PC-9 (cell line): ENCODE measurements at regions of chrX and their contacts with region 1.

Region 1: GRCh38 chrX:15425024-15425423 is 40.8 kb upstream of the VEGFD start:
- DNase-seq: no peak
- H3K4me3 ChIP-seq: no peak overlapping the region
- H3K27ac ChIP-seq: no peak overlapping the region
- H3K4me1 ChIP-seq: no peaks in the 10 kb centered on the region
- H3K27me3 ChIP-seq: no peaks in the 10 kb centered on the region
- CTCF ChIP-seq: no peak

Region 2: GRCh38 chrX:15245896-15246295 is 179.1 kb before region 1 on chrX:
- CTCF ChIA-PET with region 1: no interaction called
- POLR2A ChIA-PET with region 1: no interaction called
- intact Hi-C with region 1: no loop called
- DNase-seq: no peak
- H3K4me3 ChIP-seq: no peak overlapping the region
- H3K27ac ChIP-seq: no peak overlapping the region
- H3K4me1 ChIP-seq: no peaks in the 10 kb centered on the region
- H3K27me3 ChIP-seq: no peaks in the 10 kb centered on the region
- CTCF ChIP-seq: no peak

Region 3: DNA sequence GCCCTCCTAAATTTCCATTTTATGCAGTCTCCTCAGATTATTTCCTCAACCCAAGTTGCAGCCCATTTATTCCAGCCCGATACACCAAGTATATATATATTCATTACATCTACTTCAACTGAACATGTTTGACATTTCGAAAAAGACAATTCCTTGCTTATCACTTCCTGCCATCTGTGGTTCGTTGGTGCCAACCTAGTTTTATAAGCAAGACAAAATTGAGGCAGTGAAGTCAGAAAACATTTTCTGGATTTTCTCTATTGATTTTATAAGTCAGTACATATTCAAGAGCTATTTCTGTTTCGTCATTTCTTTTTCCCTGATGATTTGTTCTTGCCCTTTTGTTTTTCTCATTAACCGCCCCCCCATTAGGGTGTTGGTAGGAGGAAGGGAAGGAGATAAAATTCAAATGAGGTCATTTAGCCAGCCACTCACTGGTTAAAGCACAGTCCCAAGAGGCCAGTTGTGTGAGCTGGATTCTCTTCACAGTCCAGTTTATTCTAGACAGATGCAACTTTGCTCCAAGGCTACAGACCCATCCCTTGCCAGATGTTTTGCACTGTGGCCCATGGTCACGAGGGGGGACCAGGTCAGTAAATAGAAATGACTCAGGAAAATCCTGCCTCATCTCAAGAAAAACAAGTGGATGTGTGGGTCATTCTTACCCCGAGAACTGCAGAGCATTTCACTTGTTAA is 20.5 kb before region 1 on chrX:
- CTCF ChIA-PET with region 1: no interaction called
- POLR2A ChIA-PET with region 1: no interaction called
- intact Hi-C with region 1: no loop called
- DNase-seq: no peak
- H3K4me3 ChIP-seq: no peak overlapping the region
- H3K27ac ChIP-seq: no peak overlapping the region
- H3K4me1 ChIP-seq: no peaks in the 10 kb centered on the region
- H3K27me3 ChIP-seq: no peaks in the 10 kb centered on the region
- CTCF ChIP-seq: no peak

Region 4: DNA sequence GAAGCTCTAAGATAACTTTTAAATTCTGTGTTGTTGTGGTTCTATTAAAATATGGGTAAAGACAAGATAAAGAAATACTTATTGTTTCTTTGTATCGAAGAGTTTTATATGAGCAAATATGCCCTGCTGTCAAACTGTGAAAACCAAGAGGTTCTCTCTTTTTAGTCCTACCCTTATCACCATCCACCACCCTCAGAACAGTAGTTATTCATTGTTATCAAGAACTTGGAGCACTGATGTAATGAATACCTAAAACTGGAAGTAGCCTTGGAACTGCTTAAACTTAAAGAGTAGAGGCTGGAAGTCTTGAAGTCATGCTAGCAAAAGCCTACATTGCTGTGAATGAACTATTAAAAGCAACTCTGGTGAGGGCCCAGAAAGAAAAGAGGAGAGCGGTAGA is 58.9 kb after region 1 on chrX:
- CTCF ChIA-PET with region 1: no interaction called
- POLR2A ChIA-PET with region 1: no interaction called
- intact Hi-C with region 1: loop called (anchors 10 kb)
- DNase-seq: no peak
- H3K4me3 ChIP-seq: no peak overlapping the region
- H3K27ac ChIP-seq: no peak overlapping the region
- H3K4me1 ChIP-seq: no peaks in the 10 kb centered on the region
- H3K27me3 ChIP-seq: no peaks in the 10 kb centered on the region
- CTCF ChIP-seq: no peak

Region 5: GRCh38 chrX:15789979-15790768 is 365.1 kb after region 1 on chrX and contains the start of gene ZRSR2:
- CTCF ChIA-PET with region 1: no interaction called
- POLR2A ChIA-PET with region 1: no interaction called
- intact Hi-C with region 1: no loop called
- DNase-seq: peak; percentile 72 to 80
- H3K4me3 ChIP-seq: peak within 1 kb of the TSS; percentile 83
- H3K27ac ChIP-seq: peak within 1 kb of the TSS; percentile 55
- H3K4me1 ChIP-seq: peaks cover 8% of the 10 kb centered on the region; the same call in 1 of the 2 replicates
- H3K27me3 ChIP-seq: no peaks in the 10 kb centered on the region
- CTCF ChIP-seq: no peak
- total RNA-seq, gene ZRSR2: 7.2 and 7.6 TPM in 2 replicates